ENCODE measurements at regions of chr14 and their contacts with region 1.

Region 1: GRCh38 chr14:89040460-89041259 is 216.2 kb downstream of the TTC8 start:
- DNase-seq: peak; percentile 90
- ATAC-seq: peak; percentile 91
- H3K4me3 ChIP-seq: peak overlapping the region; percentile 66
- H3K27ac ChIP-seq: peak overlapping the region; percentile 94
- H3K4me1 ChIP-seq: peaks cover 23% of the 10 kb centered on the region
- H3K27me3 ChIP-seq: no peaks in the 10 kb centered on the region
- CTCF ChIP-seq: peak; percentile 98

Region 2: GRCh38 chr14:89137514-89138163 is 97.0 kb after region 1 on chr14:
- CTCF ChIA-PET with region 1: no interaction called
- POLR2A ChIA-PET with region 1: no interaction called
- intact Hi-C with region 1: loop called (anchors 2 kb)
- DNase-seq: peak; percentile 98
- ATAC-seq: peak; percentile 98
- H3K4me3 ChIP-seq: no peak overlapping the region
- H3K27ac ChIP-seq: no peak overlapping the region
- H3K4me1 ChIP-seq: peaks cover 20% of the 10 kb centered on the region
- H3K27me3 ChIP-seq: peaks cover 7% of the 10 kb centered on the region; the same call in 1 of the 2 replicates
- CTCF ChIP-seq: no peak

Region 3: GRCh38 chr14:89221109-89221810 is 180.6 kb after region 1 on chr14:
- CTCF ChIA-PET with region 1: no interaction called
- POLR2A ChIA-PET with region 1: no interaction called
- intact Hi-C with region 1: loop called (anchors 2 kb)
- DNase-seq: peak; percentile 20
- ATAC-seq: peak; percentile 81
- H3K4me3 ChIP-seq: no peak overlapping the region
- H3K27ac ChIP-seq: no peak overlapping the region
- H3K4me1 ChIP-seq: no peaks in the 10 kb centered on the region
- H3K27me3 ChIP-seq: no peaks in the 10 kb centered on the region
- CTCF ChIP-seq: no peak

Region 4: GRCh38 chr14:89303457-89304435 is 263.1 kb after region 1 on chr14:
- CTCF ChIA-PET with region 1: no interaction called
- POLR2A ChIA-PET with region 1: interaction called, 5 read pairs
- intact Hi-C with region 1: loop called (anchors 1 kb)
- DNase-seq: peak; percentile 64
- ATAC-seq: peak; percentile 50
- H3K4me3 ChIP-seq: peak overlapping the region; percentile 44
- H3K27ac ChIP-seq: peak overlapping the region; percentile 93
- H3K4me1 ChIP-seq: peaks cover 38% of the 10 kb centered on the region
- H3K27me3 ChIP-seq: no peaks in the 10 kb centered on the region
- CTCF ChIP-seq: no peak

Region 5: DNA sequence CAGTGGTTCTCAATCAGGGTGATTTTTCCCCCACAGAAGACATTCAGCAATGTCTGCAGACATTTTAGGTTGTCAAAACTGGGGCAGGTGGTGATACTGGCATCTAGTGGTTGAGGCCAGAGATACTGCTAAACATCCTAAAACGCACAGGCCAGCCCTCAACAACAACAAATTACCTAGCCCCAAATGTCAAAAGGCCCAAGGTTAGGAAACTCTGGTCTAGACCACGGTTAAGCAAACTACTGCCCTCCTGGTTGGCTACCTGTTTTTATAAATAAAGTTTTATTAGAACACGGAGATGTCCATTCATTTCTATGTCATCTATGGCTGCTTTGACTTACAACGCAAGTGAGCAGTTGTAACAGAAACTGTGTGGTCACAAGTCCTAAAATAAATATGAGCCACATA is 727.2 kb after region 1 on chr14:
- CTCF ChIA-PET with region 1: interaction called, 3 read pairs
- POLR2A ChIA-PET with region 1: no interaction called
- intact Hi-C with region 1: loop called (anchors 1 kb)
- DNase-seq: peak; percentile 67
- ATAC-seq: peak; percentile 68
- H3K4me3 ChIP-seq: no peak overlapping the region
- H3K27ac ChIP-seq: no peak overlapping the region
- H3K4me1 ChIP-seq: peaks cover 5% of the 10 kb centered on the region; the same call in 1 of the 2 replicates
- H3K27me3 ChIP-seq: no peaks in the 10 kb centered on the region
- CTCF ChIP-seq: peak; percentile 79

Region 6: DNA sequence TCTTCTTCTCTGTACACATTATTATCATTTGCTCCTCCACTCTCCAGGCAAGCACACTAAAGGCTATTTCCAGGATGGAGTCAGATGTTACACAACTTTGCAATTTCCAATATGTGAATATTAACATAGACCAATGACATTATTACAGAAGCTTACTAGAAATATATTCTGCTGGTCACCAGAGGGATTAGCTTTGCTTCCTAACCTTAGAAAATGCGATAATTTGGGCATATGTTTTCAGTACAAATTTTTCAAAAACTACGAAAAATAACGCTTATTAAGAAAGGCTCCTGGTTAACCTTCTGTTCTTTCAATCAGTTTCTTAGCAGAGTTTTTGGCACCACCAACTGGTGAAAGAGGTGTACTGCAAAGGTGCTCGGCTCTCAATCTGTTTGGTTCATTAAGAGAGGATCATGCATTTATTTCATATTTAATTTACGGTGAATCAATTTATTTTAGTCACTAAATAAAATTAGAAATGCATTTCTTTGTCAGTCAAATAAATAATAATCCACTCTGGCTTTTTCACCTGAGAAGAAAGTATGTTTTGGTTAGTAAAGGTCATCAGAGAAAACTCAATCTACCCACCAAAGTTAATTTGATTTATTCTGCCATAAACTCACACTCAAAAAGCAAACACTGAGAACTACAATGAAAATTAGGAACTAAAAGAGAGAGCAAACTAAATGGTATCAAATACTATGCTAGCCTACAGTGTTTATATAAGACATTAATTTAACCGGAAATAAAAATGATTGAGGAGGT is 874.6 kb after region 1 on chr14:
- CTCF ChIA-PET with region 1: no interaction called
- POLR2A ChIA-PET with region 1: interaction called, 5 read pairs
- intact Hi-C with region 1: loop called (anchors 1 kb)
- DNase-seq: peak; percentile 86
- ATAC-seq: no peak
- H3K4me3 ChIP-seq: no peak overlapping the region
- H3K27ac ChIP-seq: peak overlapping the region; percentile 81; the same call in 1 of the 2 replicates
- H3K4me1 ChIP-seq: peaks cover 45% of the 10 kb centered on the region
- H3K27me3 ChIP-seq: no peaks in the 10 kb centered on the region
- CTCF ChIP-seq: peak; percentile 92